ENCODE measurements at regions of chr7 and their contacts with region 1.

Region 1: DNA sequence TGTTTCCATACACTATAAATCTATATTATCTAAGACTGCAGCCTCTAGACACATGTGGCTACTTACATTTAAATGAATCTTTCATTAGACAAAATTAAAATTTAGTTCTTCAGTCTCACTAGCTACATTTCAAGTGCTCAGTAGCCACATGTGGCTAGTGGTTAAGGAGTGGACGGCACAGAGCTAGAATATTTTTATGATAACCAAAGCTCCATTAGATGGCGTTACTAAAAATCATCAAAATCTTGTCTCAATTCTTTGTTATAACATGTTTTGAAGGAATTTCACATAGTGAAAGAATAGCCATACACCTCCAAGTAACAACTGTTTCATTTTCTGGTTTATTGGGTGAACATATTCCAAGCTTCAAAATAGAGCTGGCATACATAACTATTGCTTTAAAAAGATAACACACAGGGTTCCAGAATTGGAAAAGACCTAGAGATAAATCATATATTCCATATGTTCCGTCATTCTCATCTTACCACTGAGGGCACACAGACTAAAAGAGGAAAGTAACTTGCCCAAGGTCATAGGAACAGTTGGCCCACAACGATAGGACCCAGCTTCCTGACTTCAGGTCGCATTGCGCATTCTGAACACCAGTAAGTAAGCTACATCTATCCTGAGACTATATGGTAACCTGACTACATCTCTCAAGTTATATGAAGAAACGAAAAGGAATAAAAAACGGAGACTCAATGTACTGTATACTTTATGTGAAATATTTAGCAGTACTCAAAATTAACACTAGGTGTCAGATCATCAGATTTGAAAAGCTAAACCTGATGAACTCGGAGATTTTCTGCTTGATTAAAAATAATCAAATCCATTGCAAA is 66.6 kb downstream of the CAV1 start:
- DNase-seq: peak; percentile 7
- CTCF ChIP-seq: peak; percentile 28

Region 2: GRCh38 chr7:116165717-116166116 is 425.7 kb before region 1 on chr7:
- in situ Hi-C with region 1: loop called (anchors 10 kb)
- DNase-seq: no peak
- CTCF ChIP-seq: no peak

Region 3: DNA sequence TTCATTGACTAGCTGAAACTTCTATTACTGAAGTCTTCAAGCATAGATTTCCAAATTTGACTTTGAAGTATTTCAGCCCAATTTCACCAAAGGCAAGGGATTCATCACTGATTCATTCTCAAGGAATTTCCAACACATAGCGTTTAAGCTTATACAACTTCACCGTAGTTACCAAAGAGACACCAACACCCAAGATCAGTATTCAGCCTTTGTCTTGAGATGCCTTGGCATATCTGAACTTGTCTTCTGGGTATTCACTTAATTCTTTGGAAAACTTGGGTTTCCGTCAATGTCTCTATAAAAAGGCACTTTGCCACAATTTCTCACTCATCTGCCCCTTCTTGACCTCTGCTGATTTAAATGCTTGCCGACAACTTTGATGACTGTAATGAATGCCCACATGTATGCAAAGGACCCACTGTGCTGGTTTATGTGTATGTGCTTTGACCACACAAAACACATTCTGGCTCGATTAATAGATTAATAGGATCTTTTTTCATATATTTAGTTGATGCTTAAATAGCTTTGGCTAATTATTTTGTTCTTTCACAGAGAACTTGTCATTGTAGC is 331.5 kb before region 1 on chr7:
- in situ Hi-C with region 1: loop called (anchors 10 kb)
- DNase-seq: no peak
- CTCF ChIP-seq: no peak

Region 4: GRCh38 chr7:116786791-116787443 is 195.5 kb after region 1 on chr7:
- in situ Hi-C with region 1: loop called (anchors 10 kb)
- DNase-seq: peak; percentile 65
- CTCF ChIP-seq: peak; percentile 64